Activated CD4-positive, alpha-beta memory T cell treated with anti-CD3 and anti-CD28 coated beads, Interleukin-2, amount 10 ng/mL, durations not matched to agents 7 days and 5 days (primary cell): ENCODE measurements at regions of chr1 and their contacts with region 1.

Region 1: DNA sequence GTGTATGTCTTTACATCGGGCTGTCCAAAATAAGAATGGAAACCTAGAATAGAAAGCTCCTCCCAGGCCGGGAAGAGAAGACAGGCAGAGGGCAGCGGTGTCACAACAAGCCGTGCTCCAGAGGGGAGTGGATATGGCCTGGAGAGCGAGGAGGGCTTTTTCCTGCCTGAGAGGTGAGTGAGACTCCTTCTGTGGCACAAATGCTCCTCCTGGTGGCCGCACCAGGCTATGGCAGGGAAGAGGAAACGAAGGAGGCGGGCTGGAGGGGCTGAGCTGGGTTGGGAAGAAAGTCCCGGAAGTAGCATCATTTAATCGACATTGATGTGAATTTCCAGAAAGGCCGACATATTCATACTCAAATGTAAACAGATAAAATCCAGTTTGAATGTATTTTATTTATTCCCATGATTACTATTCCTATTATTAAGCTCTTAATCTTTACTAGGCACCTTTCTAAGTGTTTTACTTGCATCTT is 54.7 kb downstream of the MEF2D start:
- DNase-seq: peak; percentile 81
- H3K4me3 Mint-ChIP-seq: no peak overlapping the region
- H3K27ac Mint-ChIP-seq: no peak overlapping the region
- H3K4me1 Mint-ChIP-seq: peaks cover 16% of the 10 kb centered on the region
- H3K27me3 Mint-ChIP-seq: peaks cover 62% of the 10 kb centered on the region

Region 2: DNA sequence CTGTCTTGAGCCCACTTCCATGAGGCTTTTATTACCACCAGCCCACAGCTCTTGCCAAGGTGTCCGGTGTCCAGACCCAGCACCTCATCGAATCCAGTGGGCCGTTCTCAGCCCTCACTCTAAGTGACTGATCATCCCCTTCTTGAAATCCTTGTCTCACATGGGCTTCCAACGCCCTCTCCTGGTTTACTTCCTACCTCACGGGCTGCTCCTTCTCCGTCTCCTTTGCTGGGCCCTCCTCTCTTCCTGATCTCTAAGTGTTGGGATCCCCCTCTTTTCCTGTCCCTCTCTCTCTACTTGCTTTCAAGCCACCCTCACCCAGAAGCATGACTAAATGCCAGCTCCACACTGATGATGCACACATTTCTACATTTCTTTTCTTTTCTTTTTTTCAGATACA is 85.9 kb before region 1 on chr1:
- CTCF ChIA-PET with region 1: interaction called, 12 read pairs
- POLR2A ChIA-PET with region 1: no interaction called
- DNase-seq: no peak
- H3K4me3 Mint-ChIP-seq: no peak overlapping the region
- H3K27ac Mint-ChIP-seq: no peak overlapping the region
- H3K4me1 Mint-ChIP-seq: peaks cover 5% of the 10 kb centered on the region
- H3K27me3 Mint-ChIP-seq: peaks cover 38% of the 10 kb centered on the region

Region 3: DNA sequence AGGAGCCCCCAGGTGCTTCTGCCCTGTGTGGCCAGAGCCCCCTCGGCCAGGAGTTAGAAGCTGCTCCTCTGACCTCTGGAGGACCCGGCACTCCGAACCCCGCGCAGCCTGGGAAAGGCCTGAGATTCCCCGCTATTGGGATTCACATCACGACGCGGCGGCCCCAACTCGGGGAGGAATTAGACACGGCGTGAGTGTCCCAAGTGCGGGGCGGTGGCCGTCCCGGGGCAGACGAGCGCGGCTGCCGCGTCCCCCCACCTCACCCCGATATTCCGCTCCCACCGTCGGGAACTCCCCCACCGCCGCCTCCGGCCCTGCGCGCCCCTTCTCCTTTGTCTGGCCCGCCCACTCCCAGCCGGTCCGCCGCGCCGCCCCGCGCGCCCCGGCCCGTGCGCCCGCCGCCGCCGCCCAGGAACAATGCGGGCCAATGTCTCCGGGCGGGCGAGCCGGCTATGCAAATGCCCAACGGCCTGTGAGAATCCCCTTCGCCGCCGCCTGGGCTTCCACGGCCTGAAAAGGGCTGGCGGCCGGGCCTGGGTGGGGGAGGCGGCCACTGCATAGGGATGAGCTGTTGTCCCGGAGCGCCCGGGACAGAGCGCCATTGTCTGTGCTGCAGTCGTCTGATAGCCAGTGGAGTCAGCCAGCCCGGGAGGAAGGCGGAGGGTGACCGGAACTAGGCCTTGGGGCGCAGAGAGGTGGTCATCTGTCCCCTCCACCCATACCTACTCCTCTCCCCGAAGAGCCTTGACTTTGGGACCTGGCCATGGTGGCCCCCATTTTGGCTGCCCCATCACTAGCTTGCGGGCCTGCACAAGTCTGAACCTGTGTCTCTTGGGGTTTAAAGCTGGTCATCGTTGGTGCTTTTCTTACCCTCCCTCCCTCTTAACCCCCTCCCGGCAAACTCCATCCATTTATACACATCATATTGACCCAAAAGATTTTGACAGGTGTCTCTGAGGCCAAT is 57.4 kb before region 1 on chr1:
- CTCF ChIA-PET with region 1: interaction called, 330 read pairs
- POLR2A ChIA-PET with region 1: interaction called, 29 read pairs
- DNase-seq: no peak
- H3K4me3 Mint-ChIP-seq: no peak overlapping the region
- H3K27ac Mint-ChIP-seq: no peak overlapping the region
- H3K4me1 Mint-ChIP-seq: peaks cover 4% of the 10 kb centered on the region
- H3K27me3 Mint-ChIP-seq: peaks cover 29% of the 10 kb centered on the region

Region 4: DNA sequence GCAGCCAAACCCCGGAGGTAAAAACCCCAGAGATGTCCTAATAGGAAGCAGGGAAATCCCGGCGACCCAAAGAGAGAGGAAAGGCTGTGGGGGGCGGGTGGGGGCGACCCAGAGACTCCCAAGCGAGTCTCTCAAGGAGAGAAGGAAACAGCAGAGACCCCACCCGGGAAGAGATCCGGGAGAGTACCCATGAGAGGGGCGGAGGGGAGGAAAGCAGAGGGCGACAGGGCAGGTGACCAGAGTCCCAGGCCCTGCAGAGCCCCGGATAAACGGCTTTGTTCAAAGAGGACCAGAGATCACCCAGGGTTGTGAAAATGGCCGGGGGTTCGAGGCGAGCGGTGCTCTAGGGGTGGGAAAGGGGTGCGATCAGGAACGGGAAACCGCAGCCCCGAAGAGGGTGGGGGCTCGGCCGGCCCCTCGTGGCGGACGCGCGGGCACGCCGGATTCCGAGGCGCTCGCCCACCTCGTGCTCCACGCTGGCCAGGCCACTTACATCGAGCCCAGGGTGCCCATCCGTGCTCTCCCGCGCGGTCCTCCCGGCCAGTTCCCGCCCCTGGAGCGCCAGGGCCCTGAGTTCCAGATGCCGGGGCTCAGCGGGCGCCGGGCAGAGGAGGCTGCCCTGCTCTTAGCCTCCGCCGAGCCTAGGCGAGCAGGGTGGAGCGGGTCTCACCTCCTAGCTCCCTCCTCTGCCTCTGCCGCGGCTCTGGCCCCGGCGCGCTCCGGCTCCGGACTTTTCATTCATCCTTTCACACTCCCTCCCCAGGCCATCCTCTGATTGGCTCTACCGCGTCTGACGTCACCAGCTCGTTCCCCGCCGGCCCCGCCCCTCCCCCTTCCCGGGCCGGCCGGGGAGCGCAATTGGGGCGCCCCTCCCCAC is 24.5 kb before region 1 on chr1:
- CTCF ChIA-PET with region 1: interaction called, 19 read pairs
- POLR2A ChIA-PET with region 1: no interaction called
- DNase-seq: peak; percentile 79
- H3K4me3 Mint-ChIP-seq: peak overlapping the region; percentile 81
- H3K27ac Mint-ChIP-seq: no peak overlapping the region
- H3K4me1 Mint-ChIP-seq: peaks cover 20% of the 10 kb centered on the region
- H3K27me3 Mint-ChIP-seq: peaks cover 88% of the 10 kb centered on the region

Region 5: DNA sequence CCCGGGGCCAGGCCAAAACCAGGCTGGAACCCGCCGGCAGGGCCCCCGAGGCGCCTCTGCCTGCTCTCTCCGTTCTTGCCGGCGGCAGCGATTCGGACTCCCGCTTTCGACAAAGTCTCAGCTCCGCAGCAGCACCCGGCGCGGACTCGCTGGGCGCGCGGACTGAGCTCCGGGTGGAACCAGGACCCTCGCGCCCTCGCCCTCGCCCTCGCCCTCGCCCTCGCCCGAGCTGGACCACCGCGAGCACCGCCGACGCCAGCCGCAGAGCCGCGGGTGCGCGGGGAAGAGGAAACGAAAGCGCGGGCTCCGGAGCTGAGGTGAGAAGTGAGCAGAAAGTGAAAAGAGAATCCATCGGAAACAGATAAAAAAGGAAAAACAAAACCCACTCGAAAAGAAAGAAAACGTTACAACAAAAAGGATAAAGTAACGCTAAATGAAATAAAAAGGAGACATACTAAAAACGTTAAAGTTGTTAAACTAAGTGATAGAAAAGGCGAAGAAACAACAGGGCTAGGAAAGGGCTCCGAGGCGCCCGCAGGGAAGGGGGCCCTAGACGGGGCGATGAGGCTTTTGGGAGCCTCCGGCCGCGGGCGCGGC is 10.2 kb before region 1 on chr1:
- CTCF ChIA-PET with region 1: interaction called, 15 read pairs
- POLR2A ChIA-PET with region 1: interaction called, 3 read pairs
- DNase-seq: peak; percentile 39
- H3K4me3 Mint-ChIP-seq: peak overlapping the region; percentile 65
- H3K27ac Mint-ChIP-seq: no peak overlapping the region
- H3K4me1 Mint-ChIP-seq: peaks cover 27% of the 10 kb centered on the region
- H3K27me3 Mint-ChIP-seq: peaks cover 88% of the 10 kb centered on the region

Region 6: GRCh38 chr1:156456622-156457465 is 11.0 kb after region 1 on chr1:
- CTCF ChIA-PET with region 1: interaction called, 23 read pairs
- POLR2A ChIA-PET with region 1: interaction called, 7 read pairs
- DNase-seq: peak; percentile 94
- H3K4me3 Mint-ChIP-seq: peak overlapping the region; percentile 83
- H3K27ac Mint-ChIP-seq: peak overlapping the region; percentile 97
- H3K4me1 Mint-ChIP-seq: peaks cover 30% of the 10 kb centered on the region
- H3K27me3 Mint-ChIP-seq: peaks cover 6% of the 10 kb centered on the region

Region 7: DNA sequence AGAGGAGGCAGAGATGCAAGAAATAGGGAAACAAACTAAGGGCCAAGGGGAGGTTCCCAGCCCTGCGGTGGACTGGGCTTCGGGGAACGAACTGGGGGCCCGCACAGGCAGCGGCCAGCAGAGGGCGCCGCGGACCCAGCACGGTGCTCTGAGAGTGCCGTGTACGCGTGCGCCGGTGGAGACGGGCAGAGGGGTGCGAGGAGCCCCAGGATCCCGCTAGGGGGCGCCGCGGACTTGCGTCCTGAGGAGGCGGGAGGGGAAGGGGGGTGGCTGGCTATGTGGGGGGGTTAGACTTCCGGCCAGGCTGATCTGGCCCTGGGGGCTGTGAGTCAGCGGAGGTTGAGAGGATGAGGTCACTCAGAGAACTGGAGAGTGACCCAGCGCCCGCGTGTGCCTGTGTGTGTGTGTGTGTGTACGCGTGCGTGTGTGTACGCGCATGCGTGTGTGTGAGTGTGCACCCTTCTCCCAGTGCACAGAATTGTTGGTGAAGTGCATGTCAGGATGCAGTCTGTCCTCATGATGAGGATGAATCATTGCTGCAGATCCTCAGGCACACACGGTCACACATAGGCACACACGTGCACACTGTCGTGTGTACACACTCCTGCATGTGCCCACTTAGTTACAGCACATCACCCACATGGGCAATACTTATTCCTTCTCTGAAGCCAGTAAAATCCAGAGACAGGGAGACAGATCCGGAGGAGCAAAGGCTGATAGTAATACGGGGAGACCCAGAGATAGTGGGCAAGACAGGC is 214.3 kb after region 1 on chr1:
- CTCF ChIA-PET with region 1: no interaction called
- POLR2A ChIA-PET with region 1: no interaction called
- DNase-seq: peak; percentile 95
- H3K4me3 Mint-ChIP-seq: peak overlapping the region; percentile 83
- H3K27ac Mint-ChIP-seq: peak overlapping the region; percentile 86
- H3K4me1 Mint-ChIP-seq: peaks cover 72% of the 10 kb centered on the region
- H3K27me3 Mint-ChIP-seq: peaks cover 30% of the 10 kb centered on the region